ENCODE measurements at regions of chr11 and their contacts with region 1.

Region 1: DNA sequence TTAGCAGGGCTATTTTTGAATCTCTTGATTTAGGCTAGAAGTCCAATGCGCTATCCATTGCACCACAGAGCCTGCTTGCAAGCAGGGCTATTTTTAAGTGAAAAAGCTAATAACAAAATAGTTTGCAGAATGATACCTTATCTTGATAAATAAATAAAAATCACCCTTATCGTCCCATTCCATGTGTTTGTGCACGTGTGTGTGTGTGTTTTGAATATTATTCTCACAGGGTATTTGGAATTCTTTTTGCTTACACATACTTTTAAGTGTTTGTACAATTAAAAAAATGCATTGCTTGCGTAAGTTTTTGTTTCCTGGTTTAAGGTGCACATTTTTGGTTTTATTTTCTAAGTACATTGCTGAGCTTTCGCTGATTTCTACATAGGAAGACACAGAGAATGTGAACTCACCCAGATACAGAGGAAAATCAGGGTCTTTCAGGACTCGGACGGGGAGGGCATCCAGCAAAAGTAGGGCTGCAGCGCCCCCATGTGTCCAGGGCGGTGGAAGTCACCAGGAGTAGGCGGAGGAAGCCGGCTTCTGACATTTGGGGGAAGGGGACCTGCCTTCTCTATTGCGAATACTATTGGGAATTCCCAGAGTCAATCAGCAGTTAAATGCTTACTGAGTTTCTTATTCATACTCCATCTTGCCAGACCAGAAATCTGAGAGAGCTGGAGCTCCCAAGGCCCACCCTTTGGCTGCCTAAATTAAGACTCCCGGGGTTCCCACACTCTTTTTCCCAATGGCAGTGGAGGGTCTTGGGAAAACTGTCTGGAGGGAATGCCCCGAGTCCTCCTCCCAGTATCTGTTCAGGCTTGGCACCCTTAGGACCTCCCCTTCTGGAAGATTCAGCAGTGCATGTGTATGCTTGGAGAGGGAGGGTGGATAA is 27.2 kb downstream of the SLC1A2 start:
- DNase-seq: peak; percentile 72 to 94 (median 86)
- ATAC-seq: peak; percentile 79
- H3K4me3 ChIP-seq: no peak overlapping the region
- H3K4me3 Mint-ChIP-seq: peak overlapping the region; percentile 75
- H3K27ac ChIP-seq: no peak overlapping the region
- H3K27ac Mint-ChIP-seq: no peak overlapping the region
- H3K4me1 ChIP-seq: peaks cover 19% of the 10 kb centered on the region
- H3K4me1 Mint-ChIP-seq: peaks cover 26% of the 10 kb centered on the region
- H3K27me3 ChIP-seq: no peaks in the 10 kb centered on the region
- H3K27me3 Mint-ChIP-seq: no peaks in the 10 kb centered on the region
- CTCF ChIP-seq: peak; percentile 93

Region 2: GRCh38 chr11:34585735-34586487 is 806.3 kb before region 1 on chr11:
- CTCF ChIA-PET with region 1: no interaction called
- POLR2A ChIA-PET with region 1: no interaction called
- intact Hi-C with region 1: loop called (anchors 1 kb)
- DNase-seq: peak in 3 of 14 experiments; percentile 43 to 60 (median 59)
- ATAC-seq: peak; percentile 37
- H3K4me3 ChIP-seq: no peak overlapping the region
- H3K4me3 Mint-ChIP-seq: no peak overlapping the region
- H3K27ac ChIP-seq: no peak overlapping the region
- H3K27ac Mint-ChIP-seq: no peak overlapping the region
- H3K4me1 ChIP-seq: no peaks in the 10 kb centered on the region
- H3K4me1 Mint-ChIP-seq: no peaks in the 10 kb centered on the region
- H3K27me3 ChIP-seq: peaks cover 0 to 3% of the 10 kb centered on the region in 2 experiments
- H3K27me3 Mint-ChIP-seq: peaks cover 28% of the 10 kb centered on the region
- CTCF ChIP-seq: peak; percentile 71

Region 3: GRCh38 chr11:34997952-34998528 is 394.1 kb before region 1 on chr11:
- CTCF ChIA-PET with region 1: interaction called, 3 read pairs
- POLR2A ChIA-PET with region 1: interaction called, 3 read pairs
- intact Hi-C with region 1: loop called (anchors 1 to 2 kb)
- DNase-seq: peak in 3 of 14 experiments; percentile 42 to 56 (median 55)
- ATAC-seq: peak; percentile 64
- H3K4me3 ChIP-seq: no peak overlapping the region
- H3K4me3 Mint-ChIP-seq: peak overlapping the region; percentile 39
- H3K27ac ChIP-seq: no peak overlapping the region
- H3K27ac Mint-ChIP-seq: peak overlapping the region; percentile 48
- H3K4me1 ChIP-seq: no peaks in the 10 kb centered on the region
- H3K4me1 Mint-ChIP-seq: peaks cover 37% of the 10 kb centered on the region
- H3K27me3 ChIP-seq: no peaks in the 10 kb centered on the region
- H3K27me3 Mint-ChIP-seq: no peaks in the 10 kb centered on the region
- CTCF ChIP-seq: peak; percentile 94

Region 4: GRCh38 chr11:35144136-35144741 is 247.9 kb before region 1 on chr11:
- CTCF ChIA-PET with region 1: no interaction called
- POLR2A ChIA-PET with region 1: no interaction called
- intact Hi-C with region 1: loop called (anchors 10 kb)
- DNase-seq: peak in 13 of 14 experiments; percentile 46 to 88 (median 61)
- ATAC-seq: peak; percentile 64
- H3K4me3 ChIP-seq: peak overlapping the region; percentile 88
- H3K4me3 Mint-ChIP-seq: peak overlapping the region; percentile 84
- H3K27ac ChIP-seq: peak overlapping the region; percentile 73 to 81
- H3K27ac Mint-ChIP-seq: peak overlapping the region; percentile 96
- H3K4me1 ChIP-seq: peaks cover 82% of the 10 kb centered on the region
- H3K4me1 Mint-ChIP-seq: peaks cover 83% of the 10 kb centered on the region
- H3K27me3 ChIP-seq: no peaks in the 10 kb centered on the region
- H3K27me3 Mint-ChIP-seq: no peaks in the 10 kb centered on the region
- CTCF ChIP-seq: no peak

Region 5: GRCh38 chr11:35313066-35313759 is 79.0 kb before region 1 on chr11:
- CTCF ChIA-PET with region 1: no interaction called
- POLR2A ChIA-PET with region 1: no interaction called
- intact Hi-C with region 1: no loop called
- DNase-seq: peak in 2 of 14 experiments; percentile 46 to 48
- ATAC-seq: no peak
- H3K4me3 ChIP-seq: no peak overlapping the region
- H3K4me3 Mint-ChIP-seq: no peak overlapping the region
- H3K27ac ChIP-seq: no peak overlapping the region
- H3K27ac Mint-ChIP-seq: no peak overlapping the region
- H3K4me1 ChIP-seq: peaks cover 18% of the 10 kb centered on the region
- H3K4me1 Mint-ChIP-seq: peaks cover 7% of the 10 kb centered on the region
- H3K27me3 ChIP-seq: no peaks in the 10 kb centered on the region
- H3K27me3 Mint-ChIP-seq: no peaks in the 10 kb centered on the region
- CTCF ChIP-seq: no peak